ENCODE measurements at regions of chr11 and their contacts with region 1.

Region 1: DNA sequence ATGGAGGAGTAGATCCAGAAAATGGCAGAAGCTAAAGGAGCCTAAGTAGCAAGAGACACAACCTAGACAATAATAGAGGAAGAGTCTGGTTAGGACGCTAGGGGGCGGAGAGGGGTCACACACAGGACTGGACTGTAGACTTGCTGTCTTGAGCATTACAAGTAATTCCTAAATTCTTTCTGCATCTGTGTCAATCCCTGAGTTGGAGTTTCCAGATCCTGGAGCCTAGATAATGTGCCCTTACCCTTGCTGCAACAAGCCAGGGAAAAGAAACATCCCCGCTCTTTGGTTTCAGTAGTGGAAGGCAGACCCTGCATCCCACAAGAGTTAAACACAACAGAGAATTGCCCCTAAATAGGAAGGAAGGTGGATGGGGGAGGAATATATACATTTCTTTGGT is 14.9 kb upstream of the CCDC73 start:
- DNase-seq: peak; percentile 74
- CTCF ChIP-seq: peak; percentile 79

Region 2: GRCh38 chr11:32792948-32793475 is 16.3 kb before region 1 on chr11:
- CTCF ChIA-PET with region 1: interaction called, 18 read pairs
- POLR2A ChIA-PET with region 1: no interaction called
- DNase-seq: peak; percentile 55
- CTCF ChIP-seq: peak; percentile 54

Region 3: GRCh38 chr11:32830802-32831201 is 21.5 kb after region 1 on chr11:
- CTCF ChIA-PET with region 1: interaction called, 14 read pairs
- POLR2A ChIA-PET with region 1: no interaction called
- DNase-seq: no peak
- CTCF ChIP-seq: no peak

Measured in GM10248 (cell line).